PC-3 (cell line): ENCODE measurements at regions of chr6 and their contacts with region 1.

Region 1: GRCh38 chr6:73747289-73747688 is 51.3 kb downstream of the CD109 start:
- DNase-seq: no peak
- ATAC-seq: no peak
- H3K4me3 ChIP-seq: no peak overlapping the region
- H3K27ac ChIP-seq: no peak overlapping the region
- H3K4me1 ChIP-seq: 0 out of 2 replicates have a peak, but pooled peaks cover 4% of the 10 kb centered on the region
- H3K27me3 ChIP-seq: no peaks in the 10 kb centered on the region
- CTCF ChIP-seq: no peak

Region 2: GRCh38 chr6:73513496-73513854 is 233.8 kb before region 1 on chr6:
- CTCF ChIA-PET with region 1: no interaction called
- POLR2A ChIA-PET with region 1: no interaction called
- intact Hi-C with region 1: no loop called
- DNase-seq: peak; percentile 26
- ATAC-seq: peak; percentile 3
- H3K4me3 ChIP-seq: no peak overlapping the region
- H3K27ac ChIP-seq: no peak overlapping the region
- H3K4me1 ChIP-seq: peaks cover 10% of the 10 kb centered on the region; the same call in 1 of the 2 replicates
- H3K27me3 ChIP-seq: no peaks in the 10 kb centered on the region
- CTCF ChIP-seq: no peak

Region 3: GRCh38 chr6:73631849-73632248 is 115.4 kb before region 1 on chr6:
- CTCF ChIA-PET with region 1: no interaction called
- POLR2A ChIA-PET with region 1: no interaction called
- intact Hi-C with region 1: no loop called
- DNase-seq: peak; percentile 10
- ATAC-seq: no peak
- H3K4me3 ChIP-seq: no peak overlapping the region
- H3K27ac ChIP-seq: no peak overlapping the region
- H3K4me1 ChIP-seq: peaks cover 14% of the 10 kb centered on the region
- H3K27me3 ChIP-seq: no peaks in the 10 kb centered on the region
- CTCF ChIP-seq: no peak

Region 4: DNA sequence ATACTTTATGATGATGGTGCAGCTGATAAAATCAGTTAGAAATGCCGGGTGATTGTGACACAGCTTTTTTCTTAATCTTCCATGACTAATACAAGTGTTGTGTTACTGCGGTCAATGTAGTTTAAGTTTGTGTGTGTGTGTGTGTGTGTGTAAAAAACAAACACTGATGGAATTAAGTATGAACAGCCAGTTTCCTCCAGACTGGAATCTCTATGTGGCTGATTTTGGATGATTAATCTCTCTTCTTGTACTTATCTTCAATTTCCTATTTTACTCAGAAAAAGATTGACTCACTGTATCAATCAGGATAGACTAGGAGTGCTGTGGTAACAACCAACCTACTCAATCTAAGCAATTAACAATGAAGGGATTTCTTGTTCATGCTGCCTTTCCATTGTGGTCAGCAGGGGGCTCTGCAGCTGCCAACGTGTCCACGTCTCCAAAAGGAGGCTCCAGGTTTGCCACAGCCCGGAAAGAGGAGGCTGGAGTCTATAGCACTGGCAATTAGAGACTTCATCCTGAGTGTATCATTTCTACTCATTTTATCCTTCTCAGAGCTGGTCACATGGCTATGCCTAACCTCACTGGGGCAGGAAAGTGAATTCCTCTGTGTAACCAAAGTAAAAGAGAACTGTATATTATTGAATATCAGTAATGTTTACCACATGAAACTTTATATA is 56.4 kb after region 1 on chr6:
- CTCF ChIA-PET with region 1: no interaction called
- POLR2A ChIA-PET with region 1: no interaction called
- intact Hi-C with region 1: loop called (anchors 10 kb)
- DNase-seq: peak; percentile 82
- ATAC-seq: peak; percentile 65
- H3K4me3 ChIP-seq: no peak overlapping the region
- H3K27ac ChIP-seq: peak overlapping the region; percentile 85
- H3K4me1 ChIP-seq: peaks cover 27% of the 10 kb centered on the region
- H3K27me3 ChIP-seq: no peaks in the 10 kb centered on the region
- CTCF ChIP-seq: peak; percentile 74

Region 5: DNA sequence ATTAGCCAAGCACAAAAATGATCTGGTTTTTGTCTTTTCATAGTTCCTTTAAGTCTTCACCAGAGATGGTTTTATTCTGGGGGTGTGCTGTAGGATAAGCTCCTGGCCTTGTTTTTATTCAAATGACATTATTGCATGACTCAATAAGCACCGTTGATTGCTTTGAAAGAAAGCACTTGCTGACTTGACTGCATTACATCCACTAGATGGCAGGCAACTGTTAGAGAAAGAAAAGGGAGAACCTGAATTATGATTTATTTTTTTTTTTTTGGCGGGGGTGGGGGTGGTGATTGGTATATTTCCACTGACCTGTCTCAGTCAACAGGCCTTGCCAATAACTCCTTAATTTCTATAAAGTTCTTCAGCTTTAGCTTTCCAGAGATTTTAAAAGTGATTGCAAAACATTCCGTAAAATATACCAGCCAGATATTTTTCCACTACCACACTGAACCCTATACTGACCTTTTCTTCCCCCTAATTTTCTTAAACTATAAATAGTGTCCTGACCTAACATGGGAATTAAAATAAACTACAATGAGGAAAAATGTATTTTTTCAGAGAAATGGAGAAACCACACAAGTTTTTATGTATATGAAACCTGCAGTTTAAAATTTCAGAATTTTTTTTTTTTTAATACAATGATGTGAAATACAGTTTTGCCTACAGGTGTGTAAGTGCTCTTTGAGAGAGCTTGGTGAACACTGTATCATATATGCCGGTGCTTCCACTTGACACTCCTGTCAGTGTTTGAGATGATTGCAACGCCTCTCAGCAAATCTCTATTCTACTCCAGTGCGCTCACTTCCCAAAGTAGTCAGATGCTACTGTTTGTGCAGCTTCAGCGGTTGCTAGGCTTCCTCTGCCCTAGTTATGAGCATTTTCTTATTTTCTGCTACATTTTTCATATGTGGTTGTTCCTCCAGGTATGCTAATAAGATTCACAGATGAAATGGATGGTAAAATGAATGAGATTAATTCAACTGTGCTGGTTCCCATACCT is 223.0 kb after region 1 on chr6:
- CTCF ChIA-PET with region 1: no interaction called
- POLR2A ChIA-PET with region 1: no interaction called
- intact Hi-C with region 1: loop called (anchors 5 kb)
- DNase-seq: peak; percentile 68
- ATAC-seq: peak; percentile 45
- H3K4me3 ChIP-seq: no peak overlapping the region
- H3K27ac ChIP-seq: no peak overlapping the region
- H3K4me1 ChIP-seq: peaks cover 18% of the 10 kb centered on the region
- H3K27me3 ChIP-seq: no peaks in the 10 kb centered on the region
- CTCF ChIP-seq: peak; percentile 82